Lower leg skin (tissue), 4 donors: ENCODE measurements at regions of chr1 and their contacts with region 1.

Region 1: DNA sequence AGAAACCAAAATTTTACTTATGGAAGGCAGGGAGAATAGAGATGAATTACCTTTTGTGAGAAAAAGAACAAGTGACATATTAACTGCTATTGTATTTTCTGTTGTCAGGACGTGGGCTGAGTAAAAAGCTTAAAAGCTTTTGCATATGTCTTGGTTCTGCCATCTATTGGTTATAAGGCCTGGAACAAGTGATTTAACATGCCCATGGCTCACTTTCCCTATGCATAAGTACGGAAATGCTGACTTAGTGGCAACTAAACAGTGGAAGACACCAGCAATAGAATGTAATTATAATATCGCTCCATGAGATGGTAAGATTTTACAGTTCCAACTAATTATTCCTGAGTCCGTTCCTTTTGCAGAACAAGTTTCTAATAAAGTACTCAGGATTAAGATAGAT is 6.7 kb upstream of the CTSS start:
- DNase-seq: no peak
- H3K4me3 ChIP-seq: no peak overlapping the region
- CTCF ChIP-seq: no peak
- POLR2A ChIP-seq: no peak

Region 2: DNA sequence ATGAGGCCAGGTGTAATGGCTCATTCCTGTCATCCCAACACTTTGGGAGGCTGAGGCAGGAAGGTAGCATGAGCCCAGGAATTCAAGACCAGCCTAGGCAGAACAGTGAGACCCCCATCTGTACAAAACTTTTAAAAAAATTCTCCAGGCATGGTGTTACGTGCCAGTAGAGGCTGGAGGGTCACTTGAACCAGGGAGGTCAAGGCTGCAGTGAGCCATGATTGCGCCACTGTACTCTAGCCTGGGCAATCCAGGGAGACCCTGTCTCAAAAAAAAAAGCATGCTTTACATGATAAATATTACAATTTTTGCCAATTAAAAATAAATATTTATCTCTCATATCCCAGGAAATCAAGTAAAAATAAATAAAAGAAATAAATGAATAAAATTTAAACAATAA is 722.4 kb before region 1 on chr1:
- intact Hi-C with region 1: loop called (anchors 5 kb)
- DNase-seq: no peak
- H3K4me3 ChIP-seq: no peak overlapping the region
- CTCF ChIP-seq: no peak
- POLR2A ChIP-seq: no peak

Region 3: DNA sequence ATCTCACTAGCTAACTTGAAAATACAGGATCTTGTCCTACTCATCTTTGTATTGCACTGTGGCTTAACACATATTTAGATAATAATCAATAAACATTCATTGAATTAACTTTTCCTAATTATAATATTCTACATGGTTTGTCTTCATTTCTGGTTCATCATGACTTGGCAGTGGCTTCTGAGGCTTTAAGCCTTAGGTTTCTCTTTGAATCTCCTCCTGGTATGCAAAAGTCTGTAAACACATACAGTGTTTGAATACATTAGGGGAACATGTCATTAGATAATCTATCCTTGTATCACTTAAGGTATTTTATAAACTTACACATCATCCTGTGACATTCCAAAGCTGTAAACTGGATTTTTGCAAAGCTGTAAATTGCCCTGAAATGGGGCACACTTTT is 15.1 kb after region 1 on chr1:
- intact Hi-C with region 1: no loop called
- DNase-seq: no peak
- H3K4me3 ChIP-seq: no peak overlapping the region
- CTCF ChIP-seq: no peak
- POLR2A ChIP-seq: no peak